Aorta (tissue), 5 donors: ENCODE measurements at regions of chr2 and their contacts with region 1.

Region 1: DNA sequence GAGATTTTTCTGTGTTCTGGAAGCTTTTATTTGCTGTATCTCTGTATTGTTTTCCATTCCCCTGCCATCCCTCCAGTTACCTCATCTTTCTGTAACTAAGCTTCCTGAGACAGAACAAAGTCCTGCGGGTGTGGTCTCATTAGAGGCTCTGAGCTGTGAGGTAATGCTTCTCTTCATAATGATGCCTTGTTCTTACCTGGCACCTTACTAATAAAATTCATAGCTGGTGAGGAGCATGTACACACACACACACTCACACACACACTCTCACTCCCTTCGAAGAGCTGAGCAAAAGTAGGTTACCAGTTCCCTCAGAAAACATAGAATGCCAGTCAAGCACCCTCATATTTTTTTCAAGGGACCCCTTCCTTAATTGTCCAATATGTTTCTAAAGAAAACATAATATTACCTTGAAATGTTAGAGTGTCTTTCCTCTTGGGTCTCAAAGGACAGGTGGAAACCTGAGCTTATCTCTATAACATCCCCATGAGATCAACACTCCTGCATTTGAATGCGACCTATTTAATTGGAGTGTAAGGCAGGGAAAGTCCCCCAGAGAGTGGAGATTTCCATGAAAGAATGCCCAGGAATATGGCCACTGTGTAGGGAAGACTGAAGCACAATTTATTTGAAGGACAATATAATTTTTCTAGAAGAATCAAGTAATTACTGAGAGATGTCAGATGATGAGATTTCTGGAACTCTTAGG is 161.6 kb upstream of the NCK2 start:
- DNase-seq: no peak
- ATAC-seq: no peak
- H3K4me3 ChIP-seq: no peak overlapping the region
- H3K27ac ChIP-seq: no peak overlapping the region
- H3K4me1 ChIP-seq: no peaks in the 10 kb centered on the region
- H3K27me3 ChIP-seq: no peaks in the 10 kb centered on the region

Region 2: DNA sequence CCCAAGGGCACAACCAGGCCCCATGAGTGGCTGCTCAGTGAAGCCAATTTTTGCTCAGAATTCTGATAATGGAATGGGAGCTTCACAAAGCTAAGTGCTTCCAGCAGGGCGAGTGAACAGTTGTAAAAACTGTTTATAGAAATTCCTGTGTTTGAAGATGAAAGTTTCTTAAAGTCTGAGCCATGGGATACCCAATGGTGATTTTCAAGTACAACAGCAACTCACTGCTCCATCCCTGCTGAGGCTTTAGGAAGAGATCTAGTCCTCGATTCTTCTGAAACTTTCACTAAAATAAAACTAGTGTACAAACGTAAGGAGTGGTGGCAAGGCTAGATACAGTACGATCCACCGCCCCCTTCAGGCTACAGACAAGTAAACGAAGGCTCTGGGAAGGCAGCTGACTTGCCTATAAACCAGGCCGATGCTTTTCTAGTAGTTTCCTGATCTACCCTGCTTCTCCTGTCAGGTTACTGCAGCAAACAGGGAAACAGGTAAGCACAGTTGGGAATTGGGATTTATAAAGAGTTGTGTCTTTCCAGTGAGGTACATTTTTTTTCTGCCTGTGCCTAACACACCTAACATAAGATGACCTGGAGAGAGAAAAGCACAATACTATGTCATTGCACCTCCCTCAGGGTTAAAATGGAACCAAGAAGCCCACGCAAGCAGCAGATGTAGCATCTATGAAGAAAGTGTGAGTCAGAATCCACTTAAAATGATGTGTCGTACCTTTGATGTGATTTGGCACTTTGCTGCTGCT is 502.3 kb after region 1 on chr2:
- intact Hi-C with region 1: loop called (anchors 5 kb)
- DNase-seq: no peak
- ATAC-seq: no peak
- H3K4me3 ChIP-seq: no peak overlapping the region
- H3K27ac ChIP-seq: no peak overlapping the region
- H3K4me1 ChIP-seq: no peaks in the 10 kb centered on the region
- H3K27me3 ChIP-seq: no peaks in the 10 kb centered on the region